Activated B cell treated with CpG ODN at 0.5 μM for 24 hours (primary cell): ENCODE measurements at regions of chr10 and their contacts with region 1.

Region 1: DNA sequence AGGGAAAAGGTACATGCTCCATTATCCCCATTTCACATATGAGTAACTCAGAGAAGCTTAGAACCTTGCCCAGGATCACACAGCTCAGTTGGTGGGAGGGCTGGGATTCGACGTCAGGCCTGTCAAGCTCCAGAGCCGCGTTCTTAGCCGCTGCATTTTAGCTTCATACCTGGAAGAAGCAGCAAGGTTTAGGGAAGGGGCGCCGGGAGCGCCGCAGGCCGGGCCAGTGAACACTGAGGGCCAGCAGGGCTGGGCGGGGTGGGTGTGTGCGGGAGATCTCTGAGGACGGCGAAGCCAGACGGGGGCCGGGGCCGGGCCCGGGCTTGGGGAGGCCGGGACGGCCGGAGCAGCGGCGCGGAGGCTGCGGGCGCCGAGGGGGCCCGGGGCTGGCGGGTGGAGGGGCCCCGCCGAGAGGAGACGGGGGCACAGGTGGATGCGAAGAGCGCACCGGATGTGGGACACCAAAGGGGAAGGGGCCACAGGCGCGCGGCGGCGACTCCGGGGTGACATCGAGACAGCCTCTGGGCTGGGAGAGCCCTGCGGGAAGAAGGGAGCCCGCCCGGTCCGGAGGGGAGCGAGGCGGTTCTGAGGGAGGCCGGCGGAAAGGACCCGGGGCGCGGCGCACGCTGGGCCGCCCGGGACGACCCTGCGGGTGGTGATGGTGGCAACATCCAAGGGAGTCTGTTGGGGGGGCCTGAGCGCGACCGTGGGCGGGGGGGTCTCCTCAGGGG is 498 bp downstream of the NDST2 start:
- DNase-seq: no peak
- ATAC-seq: peak; percentile 9
- H3K4me3 Mint-ChIP-seq: peak overlapping the region; percentile 87
- H3K27ac Mint-ChIP-seq: peak overlapping the region; percentile 83
- H3K4me1 Mint-ChIP-seq: peaks cover 31% of the 10 kb centered on the region
- H3K27me3 Mint-ChIP-seq: no peaks in the 10 kb centered on the region
- CTCF ChIP-seq: no peak

Region 2: GRCh38 chr10:73413528-73414229 is 397.2 kb before region 1 on chr10 and contains the start of gene ANXA7:
- CTCF ChIA-PET with region 1: no interaction called
- POLR2A ChIA-PET with region 1: no interaction called
- intact Hi-C with region 1: loop called (anchors 2 kb)
- DNase-seq: peak; percentile 86
- ATAC-seq: peak; percentile 93
- H3K4me3 Mint-ChIP-seq: peak within 1 kb of the TSS; percentile 92
- H3K27ac Mint-ChIP-seq: peak within 1 kb of the TSS; percentile 86
- H3K4me1 Mint-ChIP-seq: peaks cover 56% of the 10 kb centered on the region
- H3K27me3 Mint-ChIP-seq: no peaks in the 10 kb centered on the region
- CTCF ChIP-seq: no peak
- total RNA-seq, gene ANXA7: 150 TPM in 2 replicates

Region 3: DNA sequence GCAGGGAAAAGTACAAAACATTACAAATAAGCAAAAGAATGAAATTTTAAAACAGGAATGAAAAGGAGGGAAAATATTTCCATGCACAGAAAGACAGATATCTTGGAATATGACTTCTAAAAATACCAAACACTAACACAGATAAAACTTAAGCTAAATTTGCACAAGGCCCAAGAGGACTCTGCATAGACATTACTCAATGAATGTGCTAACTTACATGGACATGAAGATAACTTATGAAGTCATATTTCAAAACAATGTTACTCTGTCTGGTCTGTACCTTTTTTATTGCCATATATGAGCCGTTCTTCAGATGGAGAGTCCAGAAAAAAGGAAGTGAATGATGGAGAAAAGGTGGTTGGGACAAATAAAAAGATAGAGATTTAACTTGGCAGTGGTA is 362.5 kb before region 1 on chr10:
- CTCF ChIA-PET with region 1: no interaction called
- POLR2A ChIA-PET with region 1: no interaction called
- intact Hi-C with region 1: no loop called
- DNase-seq: no peak
- ATAC-seq: no peak
- H3K4me3 Mint-ChIP-seq: no peak overlapping the region
- H3K27ac Mint-ChIP-seq: no peak overlapping the region
- H3K4me1 Mint-ChIP-seq: no peaks in the 10 kb centered on the region
- H3K27me3 Mint-ChIP-seq: no peaks in the 10 kb centered on the region
- CTCF ChIP-seq: no peak

Region 4: GRCh38 chr10:73743905-73744663 is 66.8 kb before region 1 on chr10 and contains the start of gene SEC24C:
- CTCF ChIA-PET with region 1: no interaction called
- POLR2A ChIA-PET with region 1: no interaction called
- intact Hi-C with region 1: loop called (anchors 1 kb)
- DNase-seq: peak; percentile 86
- ATAC-seq: peak; percentile 95
- H3K4me3 Mint-ChIP-seq: peak within 1 kb of the TSS; percentile 100
- H3K27ac Mint-ChIP-seq: peak within 1 kb of the TSS; percentile 100
- H3K4me1 Mint-ChIP-seq: peaks cover 41% of the 10 kb centered on the region
- H3K27me3 Mint-ChIP-seq: no peaks in the 10 kb centered on the region
- CTCF ChIP-seq: no peak
- total RNA-seq, gene SEC24C: 78.5 and 89.8 TPM in 2 replicates

Region 5: GRCh38 chr10:73785221-73785720 is 25.6 kb before region 1 on chr10 and contains the start of gene ZSWIM8:
- CTCF ChIA-PET with region 1: interaction called, 3 read pairs
- POLR2A ChIA-PET with region 1: interaction called, 9 read pairs
- intact Hi-C with region 1: loop called (anchors 1 kb)
- DNase-seq: peak; percentile 78
- ATAC-seq: peak; percentile 88
- H3K4me3 Mint-ChIP-seq: peak within 1 kb of the TSS; percentile 99
- H3K27ac Mint-ChIP-seq: peak within 1 kb of the TSS; percentile 98
- H3K4me1 Mint-ChIP-seq: peaks cover 57% of the 10 kb centered on the region
- H3K27me3 Mint-ChIP-seq: no peaks in the 10 kb centered on the region
- CTCF ChIP-seq: no peak
- total RNA-seq, gene ZSWIM8: 67.5 and 93.0 TPM in 2 replicates

Region 6: GRCh38 chr10:73874267-73875138 is 63.6 kb after region 1 on chr10 and contains the start of gene CAMK2G:
- CTCF ChIA-PET with region 1: interaction called, 3 read pairs
- POLR2A ChIA-PET with region 1: no interaction called
- intact Hi-C with region 1: loop called (anchors 1 kb)
- DNase-seq: peak; percentile 74
- ATAC-seq: peak; percentile 90
- H3K4me3 Mint-ChIP-seq: peak within 1 kb of the TSS; percentile 95
- H3K27ac Mint-ChIP-seq: peak within 1 kb of the TSS; percentile 90
- H3K4me1 Mint-ChIP-seq: peaks cover 37% of the 10 kb centered on the region
- H3K27me3 Mint-ChIP-seq: no peaks in the 10 kb centered on the region
- CTCF ChIP-seq: no peak
- total RNA-seq, gene CAMK2G: 17.8 and 19.9 TPM in 2 replicates

Region 7: GRCh38 chr10:73879296-73880173 is 68.6 kb after region 1 on chr10:
- CTCF ChIA-PET with region 1: interaction called, 3 read pairs
- POLR2A ChIA-PET with region 1: no interaction called
- intact Hi-C with region 1: loop called (anchors 1 kb)
- DNase-seq: peak; percentile 86
- ATAC-seq: peak; percentile 96
- H3K4me3 Mint-ChIP-seq: no peak overlapping the region
- H3K27ac Mint-ChIP-seq: peak overlapping the region; percentile 67
- H3K4me1 Mint-ChIP-seq: peaks cover 22% of the 10 kb centered on the region
- H3K27me3 Mint-ChIP-seq: no peaks in the 10 kb centered on the region
- CTCF ChIP-seq: no peak

Region 8: DNA sequence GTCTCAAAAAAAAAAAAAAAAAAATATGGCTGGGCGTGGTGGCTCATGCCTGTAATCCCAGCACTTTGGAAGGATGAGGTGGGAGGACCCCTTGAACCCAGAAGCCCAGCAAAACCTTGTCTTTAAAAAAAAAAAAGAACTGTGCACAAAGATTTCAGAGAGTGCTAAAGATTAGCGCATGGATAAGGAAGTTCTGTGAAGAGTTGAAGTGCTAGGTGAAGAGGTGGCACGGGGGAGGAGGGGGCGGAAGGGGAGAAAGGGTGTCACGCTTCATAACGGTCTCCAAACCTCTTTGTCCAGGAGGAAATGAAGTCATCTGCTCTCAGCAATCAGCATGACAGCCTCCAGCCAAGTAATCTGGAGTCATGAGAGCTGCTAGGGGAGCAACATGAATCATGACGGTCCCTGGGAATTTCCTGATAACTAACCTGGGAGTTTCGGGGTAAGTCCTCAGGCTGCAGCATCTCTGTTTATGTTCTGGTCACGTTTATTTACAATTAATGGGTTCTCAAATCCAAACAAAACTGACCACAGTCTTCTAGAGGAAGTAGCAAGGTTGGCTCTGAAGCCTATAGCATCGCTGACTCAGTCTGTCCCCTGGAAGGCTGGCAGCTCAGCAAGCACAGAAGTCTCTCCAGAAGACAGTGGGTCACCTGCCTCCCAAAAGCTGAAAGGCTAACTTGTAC is 98.1 kb after region 1 on chr10:
- CTCF ChIA-PET with region 1: no interaction called
- POLR2A ChIA-PET with region 1: no interaction called
- intact Hi-C with region 1: no loop called
- DNase-seq: no peak
- ATAC-seq: peak; percentile 60
- H3K4me3 Mint-ChIP-seq: peak overlapping the region; percentile 48
- H3K27ac Mint-ChIP-seq: peak overlapping the region; percentile 12
- H3K4me1 Mint-ChIP-seq: peaks cover 36% of the 10 kb centered on the region
- H3K27me3 Mint-ChIP-seq: peaks cover 38% of the 10 kb centered on the region
- CTCF ChIP-seq: no peak

Region 9: DNA sequence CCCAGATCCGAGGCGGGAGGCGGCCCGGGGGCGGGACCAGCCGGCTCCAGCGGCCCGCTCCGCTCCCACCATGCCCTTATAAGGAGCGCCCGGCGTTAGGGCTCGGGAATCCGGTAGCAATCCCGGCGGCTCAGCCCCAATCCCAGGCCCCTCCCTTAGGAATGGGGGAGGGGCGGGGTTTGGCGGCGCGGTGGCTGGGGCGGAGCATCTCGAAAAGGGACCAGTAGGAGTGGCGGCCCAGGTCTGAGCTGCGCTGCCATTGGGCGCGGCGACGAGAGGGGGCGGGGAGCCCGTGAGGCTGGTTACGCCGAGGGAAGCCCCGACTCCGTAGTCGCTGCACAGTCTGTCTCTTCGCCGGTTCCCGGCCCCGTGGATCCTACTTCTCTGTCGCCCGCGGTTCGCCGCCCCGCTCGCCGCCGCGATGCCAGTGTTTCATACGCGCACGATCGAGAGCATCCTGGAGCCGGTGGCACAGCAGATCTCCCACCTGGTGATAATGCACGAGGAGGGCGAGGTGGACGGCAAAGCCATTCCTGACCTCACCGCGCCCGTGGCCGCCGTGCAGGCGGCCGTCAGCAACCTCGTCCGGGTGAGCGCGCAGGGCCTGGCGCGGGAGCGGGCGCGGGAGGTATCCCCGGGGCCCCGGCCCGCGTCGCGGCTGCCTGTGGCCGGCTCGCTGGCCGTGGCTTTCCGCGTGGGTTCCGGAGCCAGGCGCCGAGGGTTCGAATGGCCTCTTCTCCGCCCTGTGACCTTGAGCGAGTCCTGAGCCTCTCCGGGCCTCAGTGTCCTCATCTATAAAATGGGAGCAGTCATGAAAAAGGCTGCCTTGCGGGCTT is 187.1 kb after region 1 on chr10 and contains the start of gene VCL:
- CTCF ChIA-PET with region 1: no interaction called
- POLR2A ChIA-PET with region 1: no interaction called
- intact Hi-C with region 1: loop called (anchors 5 kb)
- DNase-seq: peak; percentile 91
- ATAC-seq: peak; percentile 97
- H3K4me3 Mint-ChIP-seq: peak within 1 kb of the TSS; percentile 96
- H3K27ac Mint-ChIP-seq: peak within 1 kb of the TSS; percentile 95
- H3K4me1 Mint-ChIP-seq: peaks cover 45% of the 10 kb centered on the region
- H3K27me3 Mint-ChIP-seq: no peaks in the 10 kb centered on the region
- CTCF ChIP-seq: no peak
- total RNA-seq, gene VCL: 21.3 and 25.8 TPM in 2 replicates